ENCODE measurements at regions of chr17 and their contacts with region 1.

Region 1: GRCh38 chr17:40536295-40537171 is 28.7 kb downstream of the CCR7 start:
- DNase-seq: no peak
- H3K4me3 ChIP-seq: no peak overlapping the region
- H3K27ac ChIP-seq: no peak overlapping the region
- H3K4me1 ChIP-seq: no peaks in the 10 kb centered on the region
- H3K27me3 ChIP-seq: no peaks in the 10 kb centered on the region
- CTCF ChIP-seq: no peak

Region 2: DNA sequence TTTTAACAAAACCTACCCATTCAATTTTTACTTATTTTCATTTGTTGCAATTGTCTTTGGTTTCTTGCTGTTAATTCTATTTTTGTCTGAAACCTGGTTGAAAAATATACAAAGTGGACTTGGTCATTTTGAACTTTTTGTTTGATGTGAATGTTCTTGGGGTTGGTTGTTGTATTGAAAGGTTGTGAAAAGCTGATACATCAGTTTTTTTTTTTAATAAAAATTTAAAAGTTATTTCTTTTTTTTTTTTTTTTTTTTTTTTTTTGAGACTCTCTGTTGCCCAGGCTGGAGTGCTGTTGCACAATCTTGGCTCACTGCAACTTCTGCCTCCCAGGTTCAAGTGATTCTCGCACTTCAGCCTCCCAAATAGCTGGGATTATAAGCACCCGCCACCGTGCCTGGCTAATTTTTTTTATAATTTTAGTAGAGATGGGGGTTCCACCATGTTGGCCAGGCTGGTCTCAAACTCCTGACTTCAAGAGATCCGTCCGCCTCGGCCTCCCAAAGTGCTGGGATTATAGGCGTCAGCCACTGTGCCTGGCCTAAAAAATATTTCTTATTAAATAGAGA is 288.5 kb before region 1 on chr17:
- CTCF ChIA-PET with region 1: no interaction called
- POLR2A ChIA-PET with region 1: no interaction called
- intact Hi-C with region 1: no loop called
- DNase-seq: no peak
- H3K4me3 ChIP-seq: no peak overlapping the region
- H3K27ac ChIP-seq: no peak overlapping the region
- H3K4me1 ChIP-seq: peaks cover 3% of the 10 kb centered on the region
- H3K27me3 ChIP-seq: no peaks in the 10 kb centered on the region
- CTCF ChIP-seq: no peak

Region 3: DNA sequence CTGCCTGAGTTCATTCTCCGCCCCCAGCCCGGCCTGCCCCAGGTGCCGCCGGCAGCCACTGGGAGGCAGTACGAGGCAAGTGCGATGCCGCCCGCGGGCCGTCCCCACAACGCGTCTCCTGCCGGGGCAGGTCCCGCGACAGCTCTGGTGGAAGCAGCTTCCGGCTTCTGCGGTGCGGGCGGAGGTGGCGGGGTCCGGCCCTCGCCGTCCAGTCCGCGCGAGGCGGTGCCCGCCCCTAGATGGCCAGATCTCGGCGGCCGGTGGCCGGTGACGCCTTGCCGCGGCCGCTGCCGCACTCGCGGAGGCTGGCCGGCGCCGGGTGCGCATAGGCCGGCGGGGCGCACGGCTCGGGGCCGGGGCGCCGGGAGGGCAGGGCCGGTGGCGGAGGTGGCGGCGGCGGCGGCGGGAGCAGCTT is 173.8 kb before region 1 on chr17:
- CTCF ChIA-PET with region 1: interaction called, 7 read pairs
- POLR2A ChIA-PET with region 1: no interaction called
- intact Hi-C with region 1: loop called (anchors 2 kb)
- DNase-seq: peak; percentile 71
- H3K4me3 ChIP-seq: peak overlapping the region; percentile 42
- H3K27ac ChIP-seq: no peak overlapping the region
- H3K4me1 ChIP-seq: no peaks in the 10 kb centered on the region
- H3K27me3 ChIP-seq: no peaks in the 10 kb centered on the region
- CTCF ChIP-seq: peak; percentile 67

Region 4: GRCh38 chr17:40417609-40418427 is 118.7 kb before region 1 on chr17 and contains the start of gene TOP2A:
- CTCF ChIA-PET with region 1: interaction called, 10 read pairs
- POLR2A ChIA-PET with region 1: interaction called, 3 read pairs
- intact Hi-C with region 1: no loop called
- DNase-seq: peak; percentile 98
- H3K4me3 ChIP-seq: peak within 1 kb of the TSS; percentile 90
- H3K27ac ChIP-seq: peak within 1 kb of the TSS; percentile 86
- H3K4me1 ChIP-seq: peaks cover 16% of the 10 kb centered on the region
- H3K27me3 ChIP-seq: no peaks in the 10 kb centered on the region
- CTCF ChIP-seq: no peak
- total RNA-seq, gene TOP2A: 188 and 216 TPM in 2 replicates

Region 5: GRCh38 chr17:40443583-40444327 is 92.8 kb before region 1 on chr17:
- CTCF ChIA-PET with region 1: interaction called, 4 read pairs
- POLR2A ChIA-PET with region 1: no interaction called
- intact Hi-C with region 1: loop called (anchors 10 kb)
- DNase-seq: peak; percentile 63
- H3K4me3 ChIP-seq: peak overlapping the region; percentile 44
- H3K27ac ChIP-seq: no peak overlapping the region
- H3K4me1 ChIP-seq: no peaks in the 10 kb centered on the region
- H3K27me3 ChIP-seq: no peaks in the 10 kb centered on the region
- CTCF ChIP-seq: 0 out of 2 replicates have a peak, but pooled peaks have one; percentile 24

Region 6: DNA sequence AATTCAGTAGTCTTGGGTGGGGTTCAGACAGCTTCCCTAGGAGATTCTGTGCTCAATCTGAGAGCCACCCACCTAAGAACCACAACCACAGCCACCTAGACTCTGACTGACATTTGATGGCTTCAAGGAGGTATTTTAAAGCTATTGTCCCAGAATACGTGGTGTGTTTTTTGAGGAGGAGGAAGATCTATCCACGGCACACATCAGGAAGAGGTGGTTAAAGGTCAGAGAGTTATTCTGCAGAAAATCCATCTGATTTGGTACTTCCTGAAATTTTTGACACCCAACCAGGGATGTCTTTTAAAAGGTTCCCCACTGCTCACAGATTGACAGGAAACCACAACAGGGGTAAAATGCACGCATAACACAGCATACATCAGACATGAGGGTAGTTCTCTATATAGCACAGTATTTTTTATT is 86.0 kb after region 1 on chr17:
- CTCF ChIA-PET with region 1: no interaction called
- POLR2A ChIA-PET with region 1: no interaction called
- intact Hi-C with region 1: no loop called
- DNase-seq: peak; percentile 16
- H3K4me3 ChIP-seq: no peak overlapping the region
- H3K27ac ChIP-seq: no peak overlapping the region
- H3K4me1 ChIP-seq: peaks cover 6% of the 10 kb centered on the region
- H3K27me3 ChIP-seq: no peaks in the 10 kb centered on the region
- CTCF ChIP-seq: no peak

Region 7: DNA sequence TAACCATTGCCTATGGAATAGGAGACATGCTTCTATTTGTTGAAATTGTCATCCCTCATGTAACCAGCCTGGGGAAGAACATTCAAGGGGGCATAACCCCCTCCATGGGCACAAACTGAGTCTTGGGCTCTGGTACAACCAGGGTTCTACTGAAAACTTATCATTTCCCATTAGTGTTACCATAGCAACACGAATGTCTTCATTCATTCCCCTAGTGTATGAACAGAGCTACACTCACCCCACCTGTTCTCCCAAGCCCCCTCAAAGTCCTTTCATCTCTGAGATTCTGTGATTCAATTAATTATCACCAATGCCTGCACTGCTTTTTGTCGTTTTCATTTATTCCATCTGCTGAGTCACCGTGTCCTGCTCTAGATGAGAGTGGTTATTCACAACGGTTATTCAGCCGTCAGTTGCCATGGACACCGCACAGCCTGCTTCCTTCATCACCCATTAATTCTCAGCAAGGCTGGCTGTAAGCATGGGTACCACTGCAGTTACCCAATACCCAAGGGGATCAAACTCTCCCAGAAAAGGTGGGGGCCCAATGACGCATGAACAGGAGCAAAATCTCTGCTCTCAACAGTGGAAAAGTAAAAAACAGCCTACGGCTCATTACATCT is 1174.0 kb after region 1 on chr17:
- CTCF ChIA-PET with region 1: interaction called, 13 read pairs
- POLR2A ChIA-PET with region 1: no interaction called
- intact Hi-C with region 1: no loop called
- DNase-seq: peak; percentile 34
- H3K4me3 ChIP-seq: no peak overlapping the region
- H3K27ac ChIP-seq: no peak overlapping the region
- H3K4me1 ChIP-seq: no peaks in the 10 kb centered on the region
- H3K27me3 ChIP-seq: no peaks in the 10 kb centered on the region
- CTCF ChIP-seq: no peak